Aorta (tissue), 5 donors: ENCODE measurements at regions of chr1 and their contacts with region 1.

Region 1: GRCh38 chr1:27603681-27604578 is at the start of gene AHDC1:
- DNase-seq: peak; percentile 95 to 97
- ATAC-seq: peak; percentile 78
- H3K4me3 ChIP-seq: peak within 1 kb of the TSS; percentile 89 to 90
- H3K27ac ChIP-seq: peak within 1 kb of the TSS; percentile 44 to 89
- H3K4me1 ChIP-seq: no peaks in the 10 kb centered on the region
- H3K27me3 ChIP-seq: no peaks in the 10 kb centered on the region
- total RNA-seq, gene AHDC1: 63.5 to 89.1 TPM

Region 2: GRCh38 chr1:27392096-27392777 is 211.7 kb before region 1 on chr1 and contains the start of gene GPR3:
- intact Hi-C with region 1: loop called (anchors 2 to 5 kb)
- DNase-seq: peak; percentile 92 to 97
- ATAC-seq: peak; percentile 93
- H3K4me3 ChIP-seq: no peak within 1 kb of the TSS
- H3K27ac ChIP-seq: no peak within 1 kb of the TSS
- H3K4me1 ChIP-seq: no peaks in the 10 kb centered on the region
- H3K27me3 ChIP-seq: no peaks in the 10 kb centered on the region
- total RNA-seq, gene GPR3: 0.68 to 0.93 TPM

Region 3: GRCh38 chr1:27416387-27417111 is 187.4 kb before region 1 on chr1:
- intact Hi-C with region 1: loop called in 1 of 2 experiments (anchors 5 kb)
- DNase-seq: no peak
- ATAC-seq: no peak
- H3K4me3 ChIP-seq: no peak overlapping the region
- H3K27ac ChIP-seq: no peak overlapping the region
- H3K4me1 ChIP-seq: no peaks in the 10 kb centered on the region
- H3K27me3 ChIP-seq: no peaks in the 10 kb centered on the region

Region 4: DNA sequence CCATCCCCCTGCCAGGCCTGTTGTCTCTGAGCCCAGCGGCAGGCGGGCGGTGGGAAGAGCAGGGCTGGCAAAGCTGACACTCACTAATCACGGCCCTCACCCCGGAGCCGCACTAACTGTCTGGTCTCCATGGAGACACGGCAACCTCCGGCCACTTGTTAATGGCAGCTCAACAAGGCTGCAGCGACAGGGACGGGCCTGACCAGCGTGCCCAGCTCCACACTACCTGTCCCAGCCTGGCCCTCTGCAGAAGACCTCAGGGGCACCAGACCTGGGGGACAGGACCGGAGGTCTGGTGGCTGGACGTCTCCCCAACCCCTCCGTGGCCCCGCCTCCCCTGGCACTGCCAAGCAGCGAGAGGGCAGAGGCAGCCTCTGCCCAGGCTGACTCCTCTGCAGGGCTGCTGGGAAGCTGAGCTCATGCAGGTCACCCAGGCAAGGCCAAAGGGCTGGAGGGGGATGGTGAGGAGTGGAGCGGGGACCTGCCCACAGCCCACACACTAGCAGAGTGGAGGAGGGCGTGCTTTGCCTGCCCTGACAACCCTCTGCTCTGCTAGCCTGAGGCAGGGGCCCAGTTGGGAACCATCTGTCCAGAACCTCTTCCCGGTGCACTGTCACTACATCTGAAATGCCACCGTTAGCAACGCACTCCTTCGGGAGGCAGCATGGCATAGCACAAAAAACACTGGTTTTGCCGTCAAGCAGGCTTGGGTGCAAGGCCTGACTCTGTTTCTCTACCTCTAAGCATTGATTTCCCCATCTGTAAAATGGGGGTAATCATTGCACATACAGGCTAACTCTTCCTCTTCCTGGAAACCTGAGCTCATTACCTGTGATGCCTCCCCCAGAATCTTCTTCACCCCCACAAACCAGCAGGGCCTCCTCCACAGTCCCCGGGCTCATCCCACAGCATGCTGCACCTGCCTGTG is 84.3 kb before region 1 on chr1:
- intact Hi-C with region 1: no loop called
- DNase-seq: peak in 1 of 2 donors; percentile 64
- ATAC-seq: no peak
- H3K4me3 ChIP-seq: no peak overlapping the region
- H3K27ac ChIP-seq: no peak overlapping the region
- H3K4me1 ChIP-seq: no peaks in the 10 kb centered on the region
- H3K27me3 ChIP-seq: no peaks in the 10 kb centered on the region

Region 5: GRCh38 chr1:27556781-27557595 is 46.9 kb before region 1 on chr1:
- intact Hi-C with region 1: loop called (anchors 2 kb)
- DNase-seq: peak; percentile 98
- ATAC-seq: peak; percentile 82
- H3K4me3 ChIP-seq: no peak overlapping the region
- H3K27ac ChIP-seq: peak overlapping the region in 1 of 2 donors; percentile 48
- H3K4me1 ChIP-seq: peaks cover 0 to 4% of the 10 kb centered on the region in 2 donors
- H3K27me3 ChIP-seq: no peaks in the 10 kb centered on the region

Region 6: GRCh38 chr1:27575840-27576331 is 28.0 kb before region 1 on chr1:
- intact Hi-C with region 1: loop called in 1 of 2 experiments (anchors 2 kb)
- DNase-seq: peak; percentile 87 to 93
- ATAC-seq: peak; percentile 77
- H3K4me3 ChIP-seq: peak overlapping the region; percentile 17 to 27
- H3K27ac ChIP-seq: peak overlapping the region; percentile 85 to 94
- H3K4me1 ChIP-seq: peaks cover 0 to 5% of the 10 kb centered on the region in 2 donors
- H3K27me3 ChIP-seq: no peaks in the 10 kb centered on the region